Naive thymus-derived CD4-positive, alpha-beta T cell (primary cell): ENCODE measurements at regions of chr4 and their contacts with region 1.

Region 1: GRCh38 chr4:56387023-56388001 is at the start of gene AASDH:
- DNase-seq: peak; percentile 92 to 98 (median 94)
- ATAC-seq: peak; percentile 95
- H3K4me3 ChIP-seq: peak within 1 kb of the TSS; percentile 94
- H3K4me3 Mint-ChIP-seq: peak within 1 kb of the TSS; percentile 87 to 99 (median 96)
- H3K27ac ChIP-seq: peak within 1 kb of the TSS; percentile 92
- H3K27ac Mint-ChIP-seq: peak within 1 kb of the TSS; percentile 97 to 100 (median 98)
- H3K4me1 ChIP-seq: peaks cover 15 to 18% of the 10 kb centered on the region in 2 donors
- H3K4me1 Mint-ChIP-seq: peaks cover 19 to 60% (median 47%) of the 10 kb centered on the region in 7 donors
- H3K27me3 ChIP-seq: no peaks in the 10 kb centered on the region
- H3K27me3 Mint-ChIP-seq: no peaks in the 10 kb centered on the region
- total RNA-seq, gene AASDH: 10.2 to 24.7 (median 15.8) TPM

Region 2: GRCh38 chr4:55546756-55547465 is 840.4 kb before region 1 on chr4 and contains the start of gene CLOCK:
- CTCF ChIA-PET with region 1: no interaction called
- POLR2A ChIA-PET with region 1: interaction called, 3 read pairs
- intact Hi-C with region 1: loop called (anchors 2 kb)
- DNase-seq: peak; percentile 79 to 87 (median 83)
- ATAC-seq: peak; percentile 82
- H3K4me3 ChIP-seq: peak within 1 kb of the TSS; percentile 82
- H3K4me3 Mint-ChIP-seq: peak within 1 kb of the TSS; percentile 88 to 96 (median 94)
- H3K27ac ChIP-seq: peak within 1 kb of the TSS; percentile 84
- H3K27ac Mint-ChIP-seq: peak within 1 kb of the TSS; percentile 87 to 92 (median 90)
- H3K4me1 ChIP-seq: peaks cover 5 to 8% of the 10 kb centered on the region in 2 donors
- H3K4me1 Mint-ChIP-seq: peaks cover 21 to 57% (median 40%) of the 10 kb centered on the region in 7 donors
- H3K27me3 ChIP-seq: no peaks in the 10 kb centered on the region
- H3K27me3 Mint-ChIP-seq: peaks cover 0 to 29% (median 0%) of the 10 kb centered on the region in 5 donors
- total RNA-seq, gene CLOCK: 7.9 to 12.6 (median 8.9) TPM

Region 3: DNA sequence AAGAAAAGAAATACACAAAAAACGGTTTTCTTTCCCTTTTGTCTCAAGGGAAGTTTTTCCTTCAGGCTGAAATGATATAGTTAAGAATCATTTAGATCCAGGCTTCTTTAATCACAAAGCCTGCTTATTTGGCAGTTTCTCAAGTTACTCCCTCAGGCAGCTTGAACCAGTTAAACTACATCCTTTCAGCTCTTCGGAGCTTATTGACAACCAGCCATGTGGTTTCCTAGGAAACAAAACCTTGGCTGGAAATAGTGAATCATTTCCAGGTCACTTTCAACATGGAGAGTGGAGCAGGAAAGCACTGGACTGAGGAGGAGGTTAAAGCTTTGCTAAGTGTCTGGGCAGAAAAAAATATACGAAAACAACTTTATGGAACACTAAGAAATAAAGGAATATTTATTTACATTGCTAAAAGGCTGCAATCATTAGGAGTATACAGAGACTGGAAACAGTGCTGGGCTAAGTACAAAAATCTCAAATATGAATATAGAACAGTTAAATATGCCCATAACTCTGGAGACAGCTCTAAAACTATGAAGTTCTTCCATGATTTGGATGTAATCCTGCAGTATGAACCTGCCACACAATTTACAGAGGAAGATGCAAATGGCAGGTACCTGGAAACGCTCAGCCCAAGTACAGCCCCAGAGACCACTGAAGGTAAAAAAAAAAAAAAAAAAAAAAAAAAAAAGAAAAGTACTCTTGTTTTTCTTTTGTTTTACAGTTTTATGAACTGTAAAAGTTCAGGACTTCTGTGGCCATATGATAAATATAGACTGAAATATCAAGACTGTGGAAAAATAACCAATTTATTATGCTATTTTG is 23.1 kb after region 1 on chr4:
- CTCF ChIA-PET with region 1: no interaction called
- POLR2A ChIA-PET with region 1: no interaction called
- intact Hi-C with region 1: no loop called
- DNase-seq: no peak
- ATAC-seq: no peak
- H3K4me3 ChIP-seq: no peak overlapping the region
- H3K4me3 Mint-ChIP-seq: no peak overlapping the region
- H3K27ac ChIP-seq: no peak overlapping the region
- H3K27ac Mint-ChIP-seq: peak overlapping the region in 2 of 9 donors; percentile 20 to 43
- H3K4me1 ChIP-seq: no peaks in the 10 kb centered on the region
- H3K4me1 Mint-ChIP-seq: peaks cover 6 to 27% (median 21%) of the 10 kb centered on the region in 7 donors
- H3K27me3 ChIP-seq: no peaks in the 10 kb centered on the region
- H3K27me3 Mint-ChIP-seq: no peaks in the 10 kb centered on the region

Region 4: GRCh38 chr4:56467284-56468096 is 80.2 kb after region 1 on chr4 and contains the start of gene SRP72:
- CTCF ChIA-PET with region 1: interaction called, 3 read pairs
- POLR2A ChIA-PET with region 1: interaction called, 7 read pairs
- intact Hi-C with region 1: loop called (anchors 1 kb)
- DNase-seq: peak; percentile 80 to 95 (median 88)
- ATAC-seq: peak; percentile 98
- H3K4me3 ChIP-seq: peak within 1 kb of the TSS; percentile 98
- H3K4me3 Mint-ChIP-seq: peak within 1 kb of the TSS; percentile 93 to 100 (median 96)
- H3K27ac ChIP-seq: peak within 1 kb of the TSS; percentile 90
- H3K27ac Mint-ChIP-seq: peak within 1 kb of the TSS; percentile 94 to 99 (median 96)
- H3K4me1 ChIP-seq: peaks cover 25 to 29% of the 10 kb centered on the region in 2 donors
- H3K4me1 Mint-ChIP-seq: peaks cover 46 to 68% (median 62%) of the 10 kb centered on the region in 7 donors
- H3K27me3 ChIP-seq: no peaks in the 10 kb centered on the region
- H3K27me3 Mint-ChIP-seq: no peaks in the 10 kb centered on the region
- total RNA-seq, gene SRP72: 98.4 to 145 (median 109) TPM

Region 5: DNA sequence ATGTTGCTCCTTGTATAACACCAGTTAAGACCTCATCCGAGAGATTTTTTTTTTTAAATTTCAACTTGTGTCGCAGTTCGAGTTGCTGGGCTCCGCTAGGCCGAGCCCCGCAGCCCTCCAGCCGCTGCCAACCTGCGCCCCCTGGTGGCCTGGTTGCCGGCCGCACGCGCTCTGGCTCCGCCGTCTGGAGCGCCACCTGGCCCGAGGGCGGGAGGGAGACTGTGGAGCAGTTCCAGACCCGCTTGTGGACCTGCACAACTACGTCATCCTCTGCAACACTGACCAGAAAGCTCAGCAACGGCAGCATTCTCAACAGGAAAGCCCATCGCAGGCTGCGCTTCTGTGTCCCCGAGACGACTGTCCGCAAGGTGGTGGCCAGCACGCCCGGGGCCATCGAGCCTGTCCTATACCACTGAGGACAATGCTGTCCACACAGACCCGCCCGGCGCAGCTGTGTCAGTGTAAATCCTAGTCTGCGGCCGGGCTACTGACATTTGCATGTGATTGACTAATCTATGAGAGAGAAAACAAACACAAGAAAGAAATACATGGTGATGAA is 157.3 kb after region 1 on chr4:
- CTCF ChIA-PET with region 1: no interaction called
- POLR2A ChIA-PET with region 1: no interaction called
- intact Hi-C with region 1: loop called in 1 of 2 experiments (anchors 1 kb)
- DNase-seq: peak; percentile 72 to 93 (median 84)
- ATAC-seq: peak; percentile 100
- H3K4me3 ChIP-seq: peak overlapping the region; percentile 68
- H3K4me3 Mint-ChIP-seq: peak overlapping the region; percentile 18 to 81 (median 74)
- H3K27ac ChIP-seq: no peak overlapping the region
- H3K27ac Mint-ChIP-seq: peak overlapping the region in 7 of 9 donors; percentile 25 to 79 (median 63)
- H3K4me1 ChIP-seq: peaks cover 0 to 4% of the 10 kb centered on the region in 2 donors
- H3K4me1 Mint-ChIP-seq: peaks cover 8 to 22% (median 21%) of the 10 kb centered on the region in 7 donors
- H3K27me3 ChIP-seq: no peaks in the 10 kb centered on the region
- H3K27me3 Mint-ChIP-seq: peaks cover 0 to 25% (median 7%) of the 10 kb centered on the region in 5 donors

Region 6: DNA sequence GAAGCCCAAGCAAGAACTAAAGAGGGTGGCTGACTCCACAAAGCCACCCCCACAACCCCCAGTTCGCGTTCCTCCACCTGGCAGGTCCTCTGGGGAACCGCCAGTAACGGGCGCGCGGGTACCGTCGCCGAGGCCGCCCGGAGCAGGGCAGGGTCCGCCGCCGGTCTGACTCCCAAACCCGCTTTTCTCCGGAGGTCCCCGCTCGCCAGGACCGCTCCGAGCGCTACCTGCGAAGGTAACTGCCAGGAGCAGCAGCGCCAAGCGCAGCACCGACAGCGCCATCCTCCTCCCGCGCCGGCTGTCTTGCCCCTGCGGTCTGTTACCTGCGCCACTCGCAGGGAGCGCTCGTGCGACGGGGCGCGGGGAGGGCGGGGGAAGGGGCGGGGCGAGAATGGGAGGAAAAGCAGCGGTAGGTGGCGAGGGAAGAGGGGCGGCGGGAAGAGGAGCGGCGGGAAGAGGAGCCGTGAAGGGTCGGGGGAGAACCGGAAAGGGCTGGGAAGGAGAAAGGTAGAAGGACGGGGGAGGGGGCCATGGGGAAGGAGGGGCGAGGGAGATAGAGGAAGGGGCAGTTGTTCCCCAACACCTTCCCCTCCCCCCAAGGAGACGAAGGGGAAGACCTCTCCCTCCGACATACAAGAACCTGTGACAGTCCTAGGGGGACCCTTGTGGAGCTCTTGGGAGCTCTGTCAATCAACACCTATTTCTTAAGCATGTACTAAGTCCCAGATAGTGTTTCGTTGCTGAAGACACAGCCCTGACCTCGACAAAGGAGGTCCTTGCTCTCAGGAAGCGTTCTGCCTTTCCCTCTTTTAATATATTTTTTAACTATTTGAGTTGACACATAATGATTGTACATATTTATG is 434.3 kb after region 1 on chr4 and contains the start of gene SPINK2:
- CTCF ChIA-PET with region 1: no interaction called
- POLR2A ChIA-PET with region 1: interaction called, 3 read pairs
- intact Hi-C with region 1: loop called in 1 of 2 experiments (anchors 1 kb)
- DNase-seq: peak; percentile 49 to 76 (median 68)
- ATAC-seq: peak; percentile 95
- H3K4me3 ChIP-seq: peak within 1 kb of the TSS; percentile 68
- H3K4me3 Mint-ChIP-seq: peak within 1 kb of the TSS; percentile 44 to 86 (median 80)
- H3K27ac ChIP-seq: no peak within 1 kb of the TSS
- H3K27ac Mint-ChIP-seq: peak within 1 kb of the TSS in 6 of 9 donors; percentile 57 to 79 (median 71)
- H3K4me1 ChIP-seq: peaks cover 12 to 17% of the 10 kb centered on the region in 2 donors
- H3K4me1 Mint-ChIP-seq: peaks cover 16 to 41% (median 35%) of the 10 kb centered on the region in 7 donors
- H3K27me3 ChIP-seq: no peaks in the 10 kb centered on the region
- H3K27me3 Mint-ChIP-seq: peaks cover 0 to 56% (median 0%) of the 10 kb centered on the region in 5 donors
- total RNA-seq, gene SPINK2: 0.99 to 5.8 (median 4.4) TPM

Region 7: DNA sequence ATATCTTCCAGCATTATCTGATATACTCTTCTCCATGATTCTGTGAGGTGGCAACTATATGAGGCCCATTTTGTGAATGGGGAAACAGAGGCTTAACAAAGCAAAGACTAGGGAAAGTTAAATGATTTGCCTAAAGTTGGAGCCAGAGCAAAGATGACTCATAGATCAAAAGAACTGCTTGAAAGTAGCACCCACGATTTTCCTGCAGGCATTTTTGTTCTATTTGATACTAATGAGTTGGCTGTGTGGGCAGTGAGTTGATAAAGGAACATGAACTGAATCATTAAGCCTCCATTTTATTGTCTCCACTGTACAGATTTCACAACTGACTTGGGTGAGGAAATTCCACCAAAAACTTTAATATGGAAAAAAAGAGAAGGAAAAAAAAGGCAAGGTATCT is 861.8 kb after region 1 on chr4:
- CTCF ChIA-PET with region 1: no interaction called
- POLR2A ChIA-PET with region 1: no interaction called
- intact Hi-C with region 1: no loop called
- DNase-seq: no peak
- ATAC-seq: no peak
- H3K4me3 ChIP-seq: no peak overlapping the region
- H3K4me3 Mint-ChIP-seq: no peak overlapping the region
- H3K27ac ChIP-seq: no peak overlapping the region
- H3K27ac Mint-ChIP-seq: no peak overlapping the region
- H3K4me1 ChIP-seq: no peaks in the 10 kb centered on the region
- H3K4me1 Mint-ChIP-seq: no peaks in the 10 kb centered on the region
- H3K27me3 ChIP-seq: no peaks in the 10 kb centered on the region
- H3K27me3 Mint-ChIP-seq: peaks cover 0 to 14% (median 0%) of the 10 kb centered on the region in 5 donors